A673 (cell line): ENCODE measurements at regions of chr11 and their contacts with region 1.

Region 1: DNA sequence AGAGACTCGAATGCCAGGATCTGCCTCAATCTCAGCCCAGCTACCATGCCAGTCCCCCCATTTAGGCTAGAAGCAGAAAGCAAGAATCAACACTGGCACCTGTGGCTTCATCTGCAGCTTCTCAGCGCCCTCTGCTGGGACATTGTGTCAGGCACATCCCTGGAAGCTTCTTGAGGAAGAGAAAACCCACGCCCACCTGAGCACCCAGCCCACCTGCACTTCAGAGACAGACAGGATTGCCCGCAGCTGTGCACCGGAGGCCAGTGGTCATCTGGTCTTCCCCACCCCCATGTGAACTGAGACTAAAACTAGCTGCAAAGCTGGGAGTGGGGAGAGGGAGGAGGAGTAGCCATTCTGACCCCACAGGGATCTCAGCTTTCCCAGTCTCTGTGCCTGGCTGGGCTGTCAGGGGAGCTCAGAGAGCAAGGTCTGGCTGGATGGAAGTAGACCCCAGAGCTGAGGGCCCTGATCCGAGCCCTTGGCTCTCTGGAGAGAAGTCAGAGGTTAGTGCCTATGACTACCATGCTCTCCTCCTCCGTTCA is 66.8 kb downstream of the FEZ1 start:
- DNase-seq: peak; percentile 69
- H3K4me3 ChIP-seq: no peak overlapping the region
- H3K27ac ChIP-seq: no peak overlapping the region
- H3K4me1 ChIP-seq: no peaks in the 10 kb centered on the region
- H3K27me3 ChIP-seq: no peaks in the 10 kb centered on the region
- CTCF ChIP-seq: peak; percentile 92

Region 2: GRCh38 chr11:125123947-125124617 is 305.2 kb before region 1 on chr11:
- CTCF ChIA-PET with region 1: interaction called, 10 read pairs
- POLR2A ChIA-PET with region 1: no interaction called
- intact Hi-C with region 1: no loop called
- DNase-seq: peak; percentile 89
- H3K4me3 ChIP-seq: no peak overlapping the region
- H3K27ac ChIP-seq: no peak overlapping the region
- H3K4me1 ChIP-seq: no peaks in the 10 kb centered on the region
- H3K27me3 ChIP-seq: no peaks in the 10 kb centered on the region
- CTCF ChIP-seq: peak; percentile 88

Region 3: GRCh38 chr11:125464270-125464662 is 35.0 kb after region 1 on chr11:
- CTCF ChIA-PET with region 1: no interaction called
- POLR2A ChIA-PET with region 1: no interaction called
- intact Hi-C with region 1: no loop called
- DNase-seq: no peak
- H3K4me3 ChIP-seq: no peak overlapping the region
- H3K27ac ChIP-seq: no peak overlapping the region
- H3K4me1 ChIP-seq: no peaks in the 10 kb centered on the region
- H3K27me3 ChIP-seq: no peaks in the 10 kb centered on the region
- CTCF ChIP-seq: no peak

Region 4: GRCh38 chr11:125874556-125875124 is 445.4 kb after region 1 on chr11:
- CTCF ChIA-PET with region 1: no interaction called
- POLR2A ChIA-PET with region 1: no interaction called
- intact Hi-C with region 1: loop called (anchors 5 kb)
- DNase-seq: peak; percentile 87
- H3K4me3 ChIP-seq: no peak overlapping the region
- H3K27ac ChIP-seq: no peak overlapping the region
- H3K4me1 ChIP-seq: no peaks in the 10 kb centered on the region
- H3K27me3 ChIP-seq: no peaks in the 10 kb centered on the region
- CTCF ChIP-seq: peak; percentile 88